ENCODE measurements at regions of chr1 and their contacts with region 1.

Region 1: GRCh38 chr1:158177700-158178450 is 2.8 kb upstream of the CD1D start:
- DNase-seq: no peak
- ATAC-seq: peak; percentile 83
- H3K4me3 ChIP-seq: no peak overlapping the region
- H3K27ac ChIP-seq: no peak overlapping the region
- H3K4me1 ChIP-seq: no peaks in the 10 kb centered on the region
- H3K27me3 ChIP-seq: peaks cover 3 to 30% of the 10 kb centered on the region in 2 experiments
- CTCF ChIP-seq: no peak
- EP300 ChIP-seq: no peak
- POLR2A ChIP-seq: no peak
- RAD21 ChIP-seq: no peak

Region 2: DNA sequence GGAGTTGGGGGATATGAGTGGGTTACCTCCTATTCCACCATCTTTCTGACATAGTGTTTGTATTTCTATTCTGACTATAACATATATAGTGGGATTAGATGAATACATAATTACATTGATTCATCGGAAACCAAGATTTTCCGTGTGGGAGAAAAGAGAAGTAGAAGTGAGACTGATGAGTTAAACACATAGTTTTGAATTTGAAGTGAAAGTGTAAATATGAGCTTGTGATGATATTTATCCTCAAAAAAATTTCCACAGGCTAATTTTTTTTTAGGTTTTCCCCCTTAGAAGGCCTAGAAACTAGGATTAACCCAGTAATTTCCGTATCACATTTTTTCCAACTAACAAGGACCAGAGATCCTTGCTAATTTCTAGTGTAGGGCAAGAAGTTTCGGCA is 146.5 kb after region 1 on chr1:
- CTCF ChIA-PET with region 1: no interaction called
- POLR2A ChIA-PET with region 1: no interaction called
- in situ Hi-C with region 1: no loop called
- intact Hi-C with region 1: no loop called
- DNase-seq: no peak
- ATAC-seq: no peak
- H3K4me3 ChIP-seq: no peak overlapping the region
- H3K27ac ChIP-seq: no peak overlapping the region
- H3K4me1 ChIP-seq: no peaks in the 10 kb centered on the region
- H3K27me3 ChIP-seq: no peaks in the 10 kb centered on the region
- CTCF ChIP-seq: no peak
- EP300 ChIP-seq: no peak
- POLR2A ChIP-seq: no peak
- RAD21 ChIP-seq: no peak

Region 3: GRCh38 chr1:159009704-159010361 is 832.0 kb after region 1 on chr1 and contains the start of gene IFI16:
- CTCF ChIA-PET with region 1: no interaction called
- POLR2A ChIA-PET with region 1: no interaction called
- in situ Hi-C with region 1: loop called (anchors 25 kb)
- intact Hi-C with region 1: no loop called
- DNase-seq: no peak
- ATAC-seq: no peak
- H3K4me3 ChIP-seq: no peak within 1 kb of the TSS
- H3K27ac ChIP-seq: no peak within 1 kb of the TSS
- H3K4me1 ChIP-seq: no peaks in the 10 kb centered on the region
- H3K27me3 ChIP-seq: peaks cover 0 to 2% of the 10 kb centered on the region in 2 experiments; a peak in 1 of 5 replicates
- CTCF ChIP-seq: no peak
- EP300 ChIP-seq: no peak
- POLR2A ChIP-seq: no peak
- RAD21 ChIP-seq: no peak
- total RNA-seq, gene IFI16: not detected in 2 replicates